ENCODE measurements at regions of chr6 and their contacts with region 1.

Region 1: GRCh38 chr6:24614043-24614420 is 32.0 kb downstream of the KIAA0319 start:
- DNase-seq: no peak
- H3K4me3 ChIP-seq: no peak overlapping the region
- H3K27ac ChIP-seq: no peak overlapping the region
- H3K4me1 ChIP-seq: no peaks in the 10 kb centered on the region
- H3K27me3 ChIP-seq: no peaks in the 10 kb centered on the region
- CTCF ChIP-seq: no peak
- POLR2A ChIP-seq: no peak

Region 2: GRCh38 chr6:24494821-24495795 is 118.9 kb before region 1 on chr6 and contains the start of gene ALDH5A1:
- CTCF ChIA-PET with region 1: no interaction called
- POLR2A ChIA-PET with region 1: no interaction called
- dilution Hi-C with region 1: no loop called
- intact Hi-C with region 1: no loop called
- DNase-seq: peak; percentile 50
- H3K4me3 ChIP-seq: peak within 1 kb of the TSS; percentile 29 to 50 (median 30)
- H3K27ac ChIP-seq: no peak within 1 kb of the TSS
- H3K4me1 ChIP-seq: peaks cover 4% of the 10 kb centered on the region
- H3K27me3 ChIP-seq: peaks cover 2 to 9% of the 10 kb centered on the region in 2 experiments
- CTCF ChIP-seq: peak in 1 of 2 donors; percentile 35
- POLR2A ChIP-seq: no peak
- total RNA-seq, gene ALDH5A1: 1.1 and 1.8 TPM in 2 replicates

Region 3: DNA sequence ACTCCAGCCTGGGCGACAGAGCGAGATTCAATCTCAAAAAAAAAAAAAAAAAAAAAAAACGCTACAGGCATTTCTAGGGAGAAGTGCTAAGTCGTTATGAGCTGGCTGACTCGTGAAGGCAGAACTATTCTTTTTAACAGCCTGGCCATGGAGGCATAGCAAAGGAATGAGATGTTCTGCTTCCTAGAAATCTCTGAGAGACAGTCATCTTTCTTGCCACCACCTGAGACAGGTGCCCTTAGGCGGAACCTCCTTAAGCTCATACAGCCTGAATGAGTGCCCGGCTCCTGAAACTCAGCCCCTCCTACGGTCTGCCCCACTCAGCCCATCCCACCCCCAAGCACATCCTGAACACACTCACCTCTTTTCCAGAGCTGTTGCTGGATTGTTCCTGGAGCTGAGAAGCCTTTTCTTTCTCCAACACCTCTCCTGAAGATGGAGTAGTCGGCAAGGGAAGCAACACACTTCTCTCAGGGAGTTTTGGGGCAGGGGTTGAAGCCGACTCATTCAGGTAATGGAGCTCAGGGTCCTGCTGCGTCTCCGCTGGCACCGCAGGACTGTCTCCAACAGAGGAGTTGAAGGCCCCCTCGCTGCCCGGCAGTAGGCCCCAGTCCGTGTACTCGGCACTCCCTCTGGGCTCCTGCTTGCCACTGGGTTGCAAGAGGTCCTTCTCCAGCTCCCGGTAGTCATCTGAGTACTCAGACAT is 18.4 kb before region 1 on chr6:
- CTCF ChIA-PET with region 1: no interaction called
- POLR2A ChIA-PET with region 1: no interaction called
- dilution Hi-C with region 1: no loop called
- intact Hi-C with region 1: loop called (anchors 1 kb)
- DNase-seq: no peak
- H3K4me3 ChIP-seq: no peak overlapping the region
- H3K27ac ChIP-seq: no peak overlapping the region
- H3K4me1 ChIP-seq: no peaks in the 10 kb centered on the region
- H3K27me3 ChIP-seq: peaks cover 0 to 2% of the 10 kb centered on the region in 2 experiments
- CTCF ChIP-seq: no peak
- POLR2A ChIP-seq: no peak

Region 4: GRCh38 chr6:24720604-24721460 is 106.8 kb after region 1 on chr6:
- CTCF ChIA-PET with region 1: no interaction called
- POLR2A ChIA-PET with region 1: no interaction called
- dilution Hi-C with region 1: no loop called
- intact Hi-C with region 1: no loop called
- DNase-seq: peak; percentile 100
- H3K4me3 ChIP-seq: peak overlapping the region; percentile 81 to 89 (median 86)
- H3K27ac ChIP-seq: peak overlapping the region; percentile 97
- H3K4me1 ChIP-seq: peaks cover 34% of the 10 kb centered on the region
- H3K27me3 ChIP-seq: no peaks in the 10 kb centered on the region
- CTCF ChIP-seq: no peak
- POLR2A ChIP-seq: peak; percentile 98

Measured in endothelial cell of umbilical vein (primary cell).